ENCODE measurements at regions of chr6 and their contacts with region 1.

Region 1: DNA sequence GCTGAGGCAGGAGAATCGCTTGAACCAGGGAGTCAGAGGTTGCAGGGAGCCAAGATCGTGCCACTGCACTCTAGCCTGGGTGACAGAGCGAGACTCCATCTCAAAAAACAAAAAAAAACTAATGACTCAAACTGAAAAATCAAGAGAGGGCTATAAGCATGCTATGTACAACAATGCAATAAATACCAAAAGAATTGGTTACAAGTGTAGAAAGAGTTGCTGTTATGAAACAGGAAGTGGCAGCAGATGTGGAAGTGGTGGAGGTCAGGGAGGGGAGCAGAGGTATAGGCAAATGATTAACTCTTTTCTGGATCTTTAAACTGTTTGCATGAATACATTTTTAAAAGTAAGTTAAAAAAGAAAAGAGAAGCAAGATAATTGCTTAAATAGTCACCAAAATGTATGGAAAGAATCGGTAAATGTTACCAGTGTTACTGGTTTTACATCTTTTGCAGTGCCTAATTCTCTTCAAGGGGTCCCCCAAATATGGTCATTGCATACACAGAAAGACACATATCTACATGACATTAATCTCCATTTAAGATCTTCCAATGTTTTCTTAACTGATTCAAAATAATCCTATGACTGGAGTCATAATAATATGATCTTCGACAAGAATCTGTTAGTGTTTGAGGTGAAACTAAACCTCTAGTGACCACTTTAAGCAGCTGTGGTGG is 15.0 kb downstream of the CALHM6 start:
- DNase-seq: peak; percentile 26 to 34
- ATAC-seq: peak; percentile 90 to 94 (median 92)
- H3K4me3 ChIP-seq: peak overlapping the region; percentile 29
- H3K4me3 Mint-ChIP-seq: peak overlapping the region; percentile 87
- H3K27ac ChIP-seq: peak overlapping the region; percentile 70
- H3K27ac Mint-ChIP-seq: peak overlapping the region; percentile 88 to 90
- H3K4me1 ChIP-seq: no peaks in the 10 kb centered on the region
- H3K4me1 Mint-ChIP-seq: peaks cover 26 to 33% of the 10 kb centered on the region in 2 donors
- H3K27me3 ChIP-seq: no peaks in the 10 kb centered on the region
- H3K27me3 Mint-ChIP-seq: no peaks in the 10 kb centered on the region
- CTCF ChIP-seq: no peak

Region 2: GRCh38 chr6:116461932-116462885 is 13.9 kb before region 1 on chr6:
- intact Hi-C with region 1: loop called (anchors 2 kb)
- DNase-seq: peak; percentile 60 to 80
- ATAC-seq: peak; percentile 87 to 90 (median 90)
- H3K4me3 ChIP-seq: peak overlapping the region; percentile 67
- H3K4me3 Mint-ChIP-seq: peak overlapping the region; percentile 90
- H3K27ac ChIP-seq: peak overlapping the region; percentile 76
- H3K27ac Mint-ChIP-seq: peak overlapping the region; percentile 21 to 82
- H3K4me1 ChIP-seq: peaks cover 15% of the 10 kb centered on the region
- H3K4me1 Mint-ChIP-seq: peaks cover 16 to 32% of the 10 kb centered on the region in 2 donors
- H3K27me3 ChIP-seq: no peaks in the 10 kb centered on the region
- H3K27me3 Mint-ChIP-seq: no peaks in the 10 kb centered on the region
- CTCF ChIP-seq: no peak

Region 3: GRCh38 chr6:116648156-116648555 is 172.0 kb after region 1 on chr6:
- intact Hi-C with region 1: no loop called
- DNase-seq: no peak
- ATAC-seq: no peak
- H3K4me3 ChIP-seq: no peak overlapping the region
- H3K4me3 Mint-ChIP-seq: no peak overlapping the region
- H3K27ac ChIP-seq: no peak overlapping the region
- H3K27ac Mint-ChIP-seq: no peak overlapping the region
- H3K4me1 ChIP-seq: no peaks in the 10 kb centered on the region
- H3K4me1 Mint-ChIP-seq: peaks cover 15 to 17% of the 10 kb centered on the region in 2 donors
- H3K27me3 ChIP-seq: no peaks in the 10 kb centered on the region
- H3K27me3 Mint-ChIP-seq: no peaks in the 10 kb centered on the region
- CTCF ChIP-seq: no peak

Measured in natural killer cell (primary cell).